ENCODE measurements at regions of chrX and their contacts with region 1.

Region 1: DNA sequence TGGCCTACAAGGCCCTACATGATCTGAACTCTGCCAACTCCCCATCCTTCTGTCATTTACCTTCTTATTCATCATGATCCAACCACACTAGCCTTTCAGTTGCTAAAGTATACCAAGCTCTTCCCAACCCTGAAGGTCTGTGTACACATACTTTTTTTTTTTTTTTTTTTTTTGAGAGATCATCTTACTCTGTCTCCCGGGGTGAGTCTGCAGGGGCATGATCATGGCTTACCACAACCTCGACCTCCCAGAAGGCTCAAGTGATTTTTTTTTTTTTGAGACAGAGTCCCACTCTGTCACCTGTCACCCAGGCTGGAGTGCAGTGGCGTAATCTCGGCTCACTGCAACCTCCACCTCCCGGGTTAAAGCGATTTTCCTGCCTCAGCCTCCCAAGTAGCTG is 5.9 kb upstream of the UTP14A start:
- DNase-seq: no peak
- ATAC-seq: no peak
- H3K4me3 ChIP-seq: no peak overlapping the region
- H3K4me1 ChIP-seq: no peaks in the 10 kb centered on the region
- CTCF ChIP-seq: no peak

Region 2: DNA sequence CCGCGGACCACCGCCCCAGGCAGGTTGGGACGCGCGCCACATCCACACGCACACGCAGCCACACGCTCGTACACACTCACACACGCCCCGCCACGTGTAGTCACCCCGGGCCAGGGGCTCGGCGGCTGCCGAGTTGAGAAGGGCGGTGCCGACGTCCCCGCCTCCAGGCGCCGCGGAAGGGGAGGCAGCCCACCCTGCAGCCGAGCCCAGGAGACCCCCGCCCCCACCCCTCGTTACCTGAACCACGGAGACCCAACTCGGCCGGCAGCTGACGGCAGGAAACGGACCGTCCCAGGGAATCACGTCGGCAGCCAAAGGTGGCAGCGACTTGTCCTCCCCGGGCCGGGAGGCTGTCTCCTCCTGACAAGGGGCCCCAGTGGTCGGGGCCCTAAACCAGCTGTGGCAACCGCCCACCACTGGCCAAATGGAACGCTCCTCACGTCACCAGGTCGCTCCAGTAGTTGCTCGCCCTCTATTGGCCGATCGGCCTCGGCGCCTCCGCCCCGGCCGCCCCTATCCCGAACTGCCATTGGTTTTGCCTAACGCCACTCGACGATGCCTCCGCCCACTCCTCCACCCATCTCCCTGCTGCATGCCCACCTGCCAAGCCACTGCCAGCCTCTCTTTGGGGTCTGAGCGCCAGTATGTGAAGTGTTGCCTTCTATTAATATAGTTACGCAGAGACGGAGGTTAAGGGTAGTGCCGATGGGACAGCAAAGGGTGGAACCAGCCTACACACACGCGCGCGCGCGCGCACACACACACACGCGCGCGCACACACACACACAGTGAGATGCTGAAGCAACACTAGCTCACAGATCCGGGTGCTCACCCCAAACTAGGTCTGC is 56.4 kb before region 1 on chrX and contains the start of gene ZDHHC9:
- intact Hi-C with region 1: loop called in 1 of 2 experiments (anchors 5 kb)
- DNase-seq: peak; percentile 90 to 92 (median 91)
- ATAC-seq: peak; percentile 94
- H3K4me3 ChIP-seq: peak within 1 kb of the TSS; percentile 46
- H3K4me1 ChIP-seq: peaks cover 2% of the 10 kb centered on the region
- CTCF ChIP-seq: no peak
- total RNA-seq, gene ZDHHC9: 23.1 to 41.2 (median 33.6) TPM